Mammary epithelial cell (primary cell): ENCODE measurements at regions of chr2 and their contacts with region 1.

Region 1: GRCh38 chr2:156065905-156066304 is 266.6 kb downstream of the NR4A2 start:
- DNase-seq: no peak
- H3K4me3 ChIP-seq: no peak overlapping the region
- H3K27ac ChIP-seq: no peak overlapping the region
- H3K4me1 ChIP-seq: peaks cover 8% of the 10 kb centered on the region
- H3K27me3 ChIP-seq: no peaks in the 10 kb centered on the region
- CTCF ChIP-seq: peak; percentile 47 to 64

Region 2: GRCh38 chr2:155841442-155841841 is 224.5 kb before region 1 on chr2:
- CTCF ChIA-PET with region 1: no interaction called
- dilution Hi-C with region 1: no loop called
- in situ Hi-C with region 1: no loop called
- intact Hi-C with region 1: no loop called
- DNase-seq: no peak
- H3K4me3 ChIP-seq: no peak overlapping the region
- H3K27ac ChIP-seq: no peak overlapping the region
- H3K4me1 ChIP-seq: no peaks in the 10 kb centered on the region
- H3K27me3 ChIP-seq: peaks cover 4% of the 10 kb centered on the region
- CTCF ChIP-seq: no peak

Region 3: DNA sequence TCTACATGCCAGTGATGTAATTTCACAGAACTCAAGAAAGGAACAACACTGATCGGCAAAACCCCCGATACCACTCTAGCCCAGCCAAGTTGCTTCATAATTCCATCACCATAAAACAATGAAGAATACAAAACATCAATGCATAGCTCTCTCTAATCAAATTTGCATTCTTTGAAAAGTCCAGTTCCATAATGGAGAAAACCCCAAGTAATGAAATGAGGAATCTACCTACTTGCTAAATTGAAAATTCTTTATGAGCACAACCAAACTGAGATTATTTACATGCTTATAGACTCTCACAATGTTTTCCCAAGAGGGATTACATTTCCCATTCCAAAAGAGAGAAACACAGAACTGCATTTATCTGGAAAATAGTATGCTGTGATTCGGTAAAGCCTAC is 80.1 kb after region 1 on chr2:
- CTCF ChIA-PET with region 1: no interaction called
- dilution Hi-C with region 1: no loop called
- in situ Hi-C with region 1: no loop called
- intact Hi-C with region 1: no loop called
- DNase-seq: no peak
- H3K4me3 ChIP-seq: no peak overlapping the region
- H3K27ac ChIP-seq: no peak overlapping the region
- H3K4me1 ChIP-seq: peaks cover 12% of the 10 kb centered on the region
- H3K27me3 ChIP-seq: no peaks in the 10 kb centered on the region
- CTCF ChIP-seq: no peak

Region 4: GRCh38 chr2:156215655-156216054 is 149.8 kb after region 1 on chr2:
- CTCF ChIA-PET with region 1: no interaction called
- dilution Hi-C with region 1: no loop called
- in situ Hi-C with region 1: no loop called
- intact Hi-C with region 1: loop called (anchors 10 kb)
- DNase-seq: no peak
- H3K4me3 ChIP-seq: no peak overlapping the region
- H3K27ac ChIP-seq: no peak overlapping the region
- H3K4me1 ChIP-seq: no peaks in the 10 kb centered on the region
- H3K27me3 ChIP-seq: no peaks in the 10 kb centered on the region
- CTCF ChIP-seq: peak in 1 of 2 donors; percentile 35

Region 5: GRCh38 chr2:156332534-156333273 is 266.8 kb after region 1 on chr2 and contains the start of gene NR4A2:
- CTCF ChIA-PET with region 1: no interaction called
- dilution Hi-C with region 1: no loop called
- in situ Hi-C with region 1: no loop called
- intact Hi-C with region 1: loop called (anchors 1 kb)
- DNase-seq: peak; percentile 92
- H3K4me3 ChIP-seq: peak within 1 kb of the TSS; percentile 66 to 86 (median 80)
- H3K27ac ChIP-seq: peak within 1 kb of the TSS; percentile 95
- H3K4me1 ChIP-seq: peaks cover 23% of the 10 kb centered on the region
- H3K27me3 ChIP-seq: no peaks in the 10 kb centered on the region
- CTCF ChIP-seq: no peak
- total RNA-seq, gene NR4A2: 0.50 to 1.3 TPM